ENCODE measurements at regions of chr1 and their contacts with region 1.

Region 1: GRCh38 chr1:62989497-62989896 is 205.6 kb downstream of the ATG4C start:
- DNase-seq: no peak
- H3K4me3 ChIP-seq: no peak overlapping the region
- H3K27ac ChIP-seq: no peak overlapping the region
- H3K27me3 ChIP-seq: peaks cover 0 to 21% (median 0%) of the 10 kb centered on the region in 45 donors
- CTCF ChIP-seq: peak in 43 of 56 donors; percentile 7 to 66 (median 33)

Region 2: DNA sequence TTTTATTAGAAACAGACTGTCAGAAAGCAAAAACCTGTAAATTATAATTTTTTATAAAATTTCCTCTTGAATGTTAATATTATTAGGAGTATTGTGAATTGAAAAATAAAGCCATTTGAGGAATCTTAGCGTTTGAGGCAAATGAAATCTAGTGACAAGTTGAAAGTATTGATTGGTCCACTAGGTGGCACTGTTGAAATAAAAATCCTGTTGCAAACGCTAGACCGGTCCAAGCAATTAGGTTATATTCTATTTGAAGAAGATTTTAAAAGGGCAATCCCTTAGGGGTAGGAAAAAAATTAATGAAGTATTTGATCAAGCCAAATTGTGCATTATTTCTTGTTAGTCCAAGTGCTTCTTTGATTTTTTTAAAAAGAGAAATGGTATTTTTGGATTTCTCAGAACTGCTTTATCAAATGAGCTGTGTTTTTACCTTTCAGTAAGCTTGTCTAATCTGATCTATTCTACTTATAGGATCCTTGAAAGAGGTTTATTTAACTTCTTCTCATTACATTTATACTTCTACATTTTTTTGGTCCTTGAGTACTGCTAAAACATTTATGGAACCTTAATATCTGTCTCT is 147.8 kb before region 1 on chr1:
- intact Hi-C with region 1: loop called in 1 of 2 experiments (anchors 2 kb)
- DNase-seq: peak in 1 of 10 donors; percentile 27
- H3K4me3 ChIP-seq: no peak overlapping the region
- H3K27ac ChIP-seq: peak overlapping the region in 17 of 59 donors; percentile 3 to 51 (median 28)
- H3K27me3 ChIP-seq: no peaks in the 10 kb centered on the region
- CTCF ChIP-seq: peak; percentile 67 to 96 (median 86)

Region 3: DNA sequence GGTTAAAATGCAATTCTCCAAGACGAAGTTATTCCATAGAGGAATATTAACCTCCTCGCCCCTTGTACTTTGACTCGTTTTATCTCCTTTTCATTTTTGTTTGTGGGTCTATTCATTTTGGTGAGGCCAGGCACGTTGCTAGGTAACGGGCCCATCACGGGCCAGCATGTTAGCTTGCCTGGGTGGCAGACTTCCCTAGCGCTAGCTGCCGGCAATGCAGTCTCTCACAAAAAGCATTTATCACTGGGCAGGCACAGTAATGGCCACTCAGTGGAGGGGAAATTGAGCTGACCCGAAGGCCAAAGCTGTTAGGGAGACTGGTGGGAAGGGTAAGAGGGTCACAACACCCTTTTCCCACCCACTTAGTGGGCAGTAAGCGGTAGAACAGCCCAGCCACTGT is 98.5 kb after region 1 on chr1:
- intact Hi-C with region 1: no loop called
- DNase-seq: peak in 9 of 10 donors; percentile 4 to 65 (median 52)
- H3K4me3 ChIP-seq: no peak overlapping the region
- H3K27ac ChIP-seq: peak overlapping the region in 5 of 59 donors; percentile 11 to 51 (median 31)
- H3K27me3 ChIP-seq: peaks cover 0 to 3% (median 0%) of the 10 kb centered on the region in 45 donors
- CTCF ChIP-seq: peak in 34 of 56 donors; percentile 14 to 57 (median 41)